ENCODE measurements at regions of chr2 and their contacts with region 1.

Region 1: DNA sequence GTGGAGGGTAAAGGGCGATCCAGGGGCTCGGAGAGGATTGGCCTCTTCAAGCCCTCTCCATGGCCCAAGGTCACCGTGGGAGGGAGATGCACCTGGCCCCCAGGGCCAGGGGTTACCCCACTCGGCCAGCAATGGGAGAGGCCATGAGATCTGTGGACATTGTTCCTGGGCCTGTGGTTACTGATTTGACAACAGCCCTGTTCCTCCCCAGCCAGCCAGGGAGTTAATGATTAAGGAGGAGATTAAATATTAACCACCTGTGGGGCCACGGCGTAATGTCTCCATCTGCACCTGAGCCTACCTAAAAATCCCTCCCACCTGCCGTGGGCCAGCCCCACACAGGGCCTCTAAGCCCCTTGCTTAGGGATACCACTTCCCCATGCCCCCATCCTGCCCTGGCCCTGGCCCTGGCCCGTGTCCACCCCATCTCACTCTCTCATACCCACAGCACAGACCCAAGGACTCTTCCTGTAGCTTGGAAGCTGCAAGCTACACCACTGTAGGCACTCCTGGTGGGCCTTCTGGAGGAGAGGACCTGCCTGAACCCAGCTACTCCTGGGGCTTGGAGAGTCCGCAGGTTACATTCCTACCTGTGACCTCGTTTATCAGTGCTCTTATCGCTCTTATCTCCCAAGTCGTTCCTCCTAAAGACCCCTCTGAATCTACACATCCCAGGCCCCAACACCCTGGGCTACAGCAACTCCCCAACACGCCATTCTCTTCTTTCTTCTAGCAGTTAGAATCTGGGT is 32.1 kb downstream of the ZFP36L2 start:
- DNase-seq: no peak
- H3K4me3 Mint-ChIP-seq: peak overlapping the region; percentile 58
- H3K27ac Mint-ChIP-seq: peak overlapping the region; percentile 86
- H3K4me1 Mint-ChIP-seq: peaks cover 41% of the 10 kb centered on the region
- H3K27me3 Mint-ChIP-seq: no peaks in the 10 kb centered on the region

Region 2: DNA sequence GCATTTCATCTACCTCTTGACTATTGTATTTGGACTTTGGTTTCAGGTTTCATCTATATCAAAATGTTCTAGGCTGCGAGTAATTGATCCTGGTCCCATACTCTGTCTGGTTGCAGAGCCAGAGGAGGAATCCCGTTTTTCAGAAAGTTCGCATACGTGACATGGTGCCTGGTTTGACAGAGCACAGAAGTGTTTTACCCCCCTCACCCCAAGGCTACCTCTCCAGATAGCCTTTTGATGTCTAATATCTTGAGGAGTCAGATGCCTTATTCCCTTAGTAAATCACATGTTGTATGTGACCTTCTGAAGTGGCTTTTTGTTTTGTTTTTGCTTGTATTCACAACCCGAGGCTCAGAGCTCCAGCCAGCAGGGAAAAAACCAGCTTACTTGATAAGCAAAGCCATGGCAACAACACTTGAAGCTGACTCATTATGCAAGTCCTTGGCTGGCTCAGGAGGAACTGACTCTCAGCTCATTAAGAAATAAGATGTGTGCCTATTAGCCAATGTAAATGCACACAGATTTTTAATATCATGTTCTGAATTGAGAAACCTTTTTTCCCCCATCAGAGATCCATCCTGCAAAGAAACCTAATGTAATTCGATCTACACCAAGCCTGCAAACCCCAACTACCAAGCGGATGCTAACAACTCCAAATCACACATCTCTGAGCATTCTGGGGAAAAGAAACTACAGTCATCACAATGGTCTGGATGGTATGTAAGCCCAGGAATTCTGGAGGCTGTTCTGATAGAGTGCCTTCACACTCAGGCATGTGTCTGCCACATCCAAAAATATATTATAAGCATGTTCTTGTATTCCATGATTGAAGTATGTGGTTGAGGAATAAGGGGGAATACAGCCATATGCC is 471.7 kb before region 1 on chr2:
- intact Hi-C with region 1: no loop called
- DNase-seq: peak; percentile 41
- H3K4me3 Mint-ChIP-seq: no peak overlapping the region
- H3K27ac Mint-ChIP-seq: peak overlapping the region; percentile 72
- H3K4me1 Mint-ChIP-seq: peaks cover 18% of the 10 kb centered on the region
- H3K27me3 Mint-ChIP-seq: no peaks in the 10 kb centered on the region

Region 3: GRCh38 chr2:43161650-43162510 is 32.4 kb before region 1 on chr2:
- intact Hi-C with region 1: no loop called
- DNase-seq: no peak
- H3K4me3 Mint-ChIP-seq: no peak overlapping the region
- H3K27ac Mint-ChIP-seq: peak overlapping the region; percentile 26
- H3K4me1 Mint-ChIP-seq: peaks cover 37% of the 10 kb centered on the region
- H3K27me3 Mint-ChIP-seq: no peaks in the 10 kb centered on the region

Region 4: DNA sequence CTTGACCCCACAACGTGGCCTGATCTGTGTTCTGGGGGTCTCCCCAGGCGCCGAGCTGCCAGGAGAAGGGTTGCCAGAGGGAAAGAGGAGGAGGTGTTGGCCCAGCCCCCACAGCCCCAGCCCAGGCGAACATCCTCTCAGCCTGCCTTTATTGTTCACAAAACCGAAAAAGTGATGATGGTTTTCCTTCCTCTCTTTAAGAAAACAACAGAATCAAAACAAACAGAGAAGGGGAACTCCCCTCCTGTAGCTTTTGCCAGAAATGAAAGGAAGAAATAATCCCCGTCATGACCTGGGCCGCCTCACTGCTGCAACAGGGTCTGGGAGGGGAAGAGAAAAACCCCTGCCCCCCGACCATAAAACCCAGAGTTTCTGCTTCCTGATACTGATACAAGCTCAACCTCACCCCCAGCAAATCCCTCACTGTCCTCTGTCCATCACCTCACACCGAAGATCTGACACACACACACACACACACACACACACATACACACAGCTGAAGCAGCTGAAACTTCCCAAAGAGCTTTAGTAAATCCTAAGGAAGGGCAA is 19.9 kb before region 1 on chr2:
- intact Hi-C with region 1: loop called (anchors 1 kb)
- DNase-seq: peak; percentile 73
- H3K4me3 Mint-ChIP-seq: peak overlapping the region; percentile 38
- H3K27ac Mint-ChIP-seq: peak overlapping the region; percentile 91
- H3K4me1 Mint-ChIP-seq: peaks cover 69% of the 10 kb centered on the region
- H3K27me3 Mint-ChIP-seq: no peaks in the 10 kb centered on the region